Posterior vena cava (tissue), 2 donors: ENCODE measurements at regions of chr1 and their contacts with region 1.

Region 1: GRCh38 chr1:244599937-244600350 is 53.0 kb upstream of the DESI2 start:
- DNase-seq: no peak

Region 2: GRCh38 chr1:244200596-244200995 is 399.3 kb before region 1 on chr1:
- intact Hi-C with region 1: loop called in 1 of 2 experiments (anchors 5 kb)
- DNase-seq: no peak

Region 3: GRCh38 chr1:244796718-244797406 is 196.9 kb after region 1 on chr1:
- intact Hi-C with region 1: loop called (anchors 5 kb)
- DNase-seq: peak; percentile 58

Region 4: GRCh38 chr1:245045087-245045881 is 445.3 kb after region 1 on chr1:
- intact Hi-C with region 1: loop called (anchors 5 to 10 kb)
- DNase-seq: no peak